Activated CD4-positive, alpha-beta memory T cell treated with anti-CD3 and anti-CD28 coated beads for 36 hours (primary cell): ENCODE measurements at regions of chr17 and their contacts with region 1.

Region 1: DNA sequence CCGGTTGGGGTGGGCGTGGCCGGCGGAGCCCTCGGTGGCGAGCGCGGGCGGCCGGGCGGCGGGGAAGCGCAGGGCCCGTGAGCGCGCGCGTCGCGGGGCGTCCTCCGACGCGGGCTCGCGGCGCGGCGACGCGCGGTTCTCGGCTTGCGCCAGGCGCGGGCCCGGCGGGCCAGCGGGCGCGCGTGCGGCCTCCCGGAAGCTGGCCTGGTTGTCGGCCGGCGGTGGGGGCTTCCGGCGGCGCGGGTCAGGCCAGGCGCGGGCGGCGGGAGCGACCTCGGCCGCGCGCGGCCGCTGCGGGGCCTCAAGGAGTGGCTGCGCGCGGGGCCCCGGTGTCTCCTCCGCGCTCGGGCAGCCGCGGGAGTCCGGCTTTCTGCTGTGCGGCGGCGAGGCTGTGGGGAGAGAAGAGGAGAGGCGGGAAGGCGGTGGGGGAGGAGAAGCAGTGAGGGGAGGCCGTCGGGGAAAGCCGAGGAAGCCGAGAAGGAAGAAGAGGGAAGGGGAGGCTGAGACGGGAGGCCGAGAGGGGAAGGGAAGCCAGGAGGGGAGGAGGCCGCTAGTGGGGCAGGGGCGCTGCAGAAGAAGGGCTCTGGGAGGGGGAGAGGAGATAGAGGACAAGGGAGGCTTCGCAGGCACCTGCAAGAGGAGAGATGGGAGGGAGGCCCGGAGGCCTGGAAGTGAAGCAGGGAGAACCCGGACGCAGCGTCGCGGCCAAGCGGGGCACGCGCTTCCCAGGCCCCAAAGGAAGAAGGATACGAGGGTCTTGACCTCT is 2.5 kb downstream of the C17orf58 start:
- DNase-seq: peak; percentile 82
- H3K4me3 Mint-ChIP-seq: peak overlapping the region; percentile 76
- H3K27ac Mint-ChIP-seq: peak overlapping the region; percentile 79
- H3K4me1 Mint-ChIP-seq: peaks cover 30% of the 10 kb centered on the region
- H3K27me3 Mint-ChIP-seq: no peaks in the 10 kb centered on the region

Region 2: DNA sequence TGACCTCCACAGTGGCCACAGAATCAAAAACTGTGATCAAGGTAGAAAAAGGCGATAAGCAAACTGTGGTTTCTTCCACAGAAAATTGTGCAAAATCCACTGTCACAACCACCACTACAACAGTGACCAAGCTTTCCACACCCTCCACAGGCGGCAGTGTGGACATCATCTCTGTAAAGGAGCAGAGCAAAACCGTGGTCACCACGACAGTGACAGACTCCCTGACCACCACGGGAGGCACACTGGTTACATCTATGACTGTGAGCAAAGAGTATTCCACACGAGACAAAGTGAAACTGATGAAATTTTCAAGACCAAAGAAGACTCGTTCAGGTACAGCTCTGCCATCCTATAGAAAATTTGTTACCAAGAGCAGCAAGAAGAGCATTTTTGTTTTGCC is 81.1 kb before region 1 on chr17:
- CTCF ChIA-PET with region 1: no interaction called
- POLR2A ChIA-PET with region 1: no interaction called
- intact Hi-C with region 1: loop called (anchors 1 kb)
- DNase-seq: peak; percentile 37
- H3K4me3 Mint-ChIP-seq: no peak overlapping the region
- H3K27ac Mint-ChIP-seq: peak overlapping the region; percentile 18
- H3K4me1 Mint-ChIP-seq: peaks cover 25% of the 10 kb centered on the region
- H3K27me3 Mint-ChIP-seq: no peaks in the 10 kb centered on the region

Region 3: DNA sequence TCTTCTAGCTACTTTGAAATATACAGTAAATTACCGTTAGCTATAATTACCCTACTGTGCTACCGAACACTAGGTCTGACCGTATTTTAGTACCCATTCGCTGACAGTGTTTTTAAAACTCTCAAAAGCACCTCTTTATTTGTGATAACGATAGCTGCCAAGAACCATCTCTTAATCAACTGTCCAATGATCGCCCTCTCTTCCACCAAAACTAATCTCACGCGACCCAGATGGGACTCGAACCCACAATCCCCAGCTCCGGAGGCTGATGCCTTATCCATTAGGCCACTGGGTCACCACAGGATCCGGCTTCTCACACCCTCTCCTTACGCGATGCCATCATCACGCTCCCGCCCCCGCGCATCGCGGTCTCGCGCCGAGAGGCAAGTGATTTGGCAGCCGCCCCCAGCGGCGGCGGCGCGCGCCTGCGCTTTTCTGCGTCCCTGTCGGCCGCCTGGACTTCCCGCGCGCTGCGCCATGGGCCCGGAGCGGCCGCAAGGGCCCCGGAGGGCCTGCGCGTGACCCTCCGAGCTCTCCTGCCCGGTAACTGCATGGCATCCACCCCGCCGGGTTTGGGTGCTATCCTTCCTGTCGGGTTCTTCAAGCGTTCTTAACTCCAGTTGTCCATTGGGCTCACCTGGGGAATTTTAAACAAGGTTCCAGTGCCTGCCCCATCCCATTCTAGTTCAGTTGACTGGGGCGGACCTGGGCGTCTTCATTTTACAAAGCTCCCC is 26.1 kb after region 1 on chr17:
- CTCF ChIA-PET with region 1: interaction called, 5 read pairs
- POLR2A ChIA-PET with region 1: interaction called, 21 read pairs
- intact Hi-C with region 1: loop called (anchors 1 kb)
- DNase-seq: peak; percentile 99
- H3K4me3 Mint-ChIP-seq: peak overlapping the region; percentile 86
- H3K27ac Mint-ChIP-seq: peak overlapping the region; percentile 75
- H3K4me1 Mint-ChIP-seq: peaks cover 9% of the 10 kb centered on the region
- H3K27me3 Mint-ChIP-seq: peaks cover 2% of the 10 kb centered on the region

Region 4: DNA sequence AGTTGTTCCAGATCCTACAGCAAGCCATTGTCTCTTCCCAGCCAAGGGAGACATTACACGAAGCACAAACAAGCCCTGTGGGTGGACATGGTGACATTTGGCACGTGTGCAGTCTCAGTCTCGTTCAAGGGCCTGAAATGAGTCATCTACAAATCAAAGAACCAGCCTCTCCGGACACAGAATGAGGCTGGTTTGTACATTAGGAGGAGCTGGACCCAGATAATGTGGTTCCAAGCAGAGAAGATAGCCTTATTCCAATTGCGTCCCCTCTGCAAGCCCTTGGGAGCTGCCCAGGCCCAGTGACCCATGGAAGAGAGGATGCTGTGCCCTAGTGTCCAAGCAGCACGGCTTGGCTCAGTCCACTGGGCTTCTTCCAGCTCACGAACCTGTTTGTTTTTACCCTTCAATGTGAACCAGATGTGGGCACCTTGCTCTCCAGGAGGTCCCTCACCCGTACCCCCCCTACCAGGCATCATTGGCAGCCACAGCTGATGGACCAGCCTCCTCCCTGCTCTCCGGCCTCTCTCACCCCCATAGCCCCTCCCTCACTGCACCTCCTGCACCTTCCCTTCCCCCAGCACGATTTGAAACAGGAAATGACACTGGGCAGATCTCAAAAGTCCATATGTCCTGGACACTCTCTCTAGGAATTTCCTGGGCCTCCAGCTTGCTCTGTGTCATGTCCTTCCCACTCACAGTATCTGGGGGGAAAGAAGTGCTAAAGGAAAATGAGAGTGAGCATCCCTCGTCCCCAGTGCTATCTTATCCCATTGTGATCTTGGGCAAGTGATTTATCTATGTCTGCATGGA is 67.9 kb after region 1 on chr17:
- CTCF ChIA-PET with region 1: no interaction called
- POLR2A ChIA-PET with region 1: no interaction called
- intact Hi-C with region 1: no loop called
- DNase-seq: no peak
- H3K4me3 Mint-ChIP-seq: no peak overlapping the region
- H3K27ac Mint-ChIP-seq: no peak overlapping the region
- H3K4me1 Mint-ChIP-seq: peaks cover 23% of the 10 kb centered on the region
- H3K27me3 Mint-ChIP-seq: no peaks in the 10 kb centered on the region

Region 5: DNA sequence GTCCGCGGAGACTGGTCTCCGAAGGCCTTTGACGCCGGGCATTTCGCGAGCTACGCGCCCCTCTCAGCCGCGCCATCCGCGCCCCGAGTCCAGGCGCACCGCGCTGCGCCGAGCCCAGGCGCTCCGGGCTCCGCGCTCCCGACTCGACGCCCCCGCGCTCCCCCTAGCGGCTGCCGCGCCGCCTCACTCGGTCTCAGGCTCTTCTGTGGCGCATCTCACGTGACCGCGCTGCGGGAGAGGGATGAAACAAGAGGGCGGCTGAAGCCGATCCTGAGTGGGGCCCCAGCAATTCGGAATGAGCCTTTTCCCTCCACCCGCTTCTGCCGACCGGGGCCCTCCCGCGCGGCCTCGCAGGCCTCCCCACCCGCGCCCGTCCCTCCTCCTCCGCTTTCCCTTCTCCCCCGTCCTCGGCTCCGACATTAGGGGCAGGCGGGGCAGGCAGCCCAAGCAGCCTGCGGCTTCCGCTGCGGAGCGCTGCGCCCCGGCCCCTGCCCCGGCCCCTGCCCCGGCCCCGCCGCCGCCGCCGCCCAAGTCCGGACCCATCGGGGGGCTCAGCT is 211.6 kb after region 1 on chr17:
- CTCF ChIA-PET with region 1: no interaction called
- POLR2A ChIA-PET with region 1: no interaction called
- intact Hi-C with region 1: loop called (anchors 5 kb)
- DNase-seq: peak; percentile 93
- H3K4me3 Mint-ChIP-seq: peak overlapping the region; percentile 81
- H3K27ac Mint-ChIP-seq: peak overlapping the region; percentile 89
- H3K4me1 Mint-ChIP-seq: peaks cover 32% of the 10 kb centered on the region
- H3K27me3 Mint-ChIP-seq: no peaks in the 10 kb centered on the region

Region 6: GRCh38 chr17:69327060-69327831 is 1333.5 kb after region 1 on chr17 and contains the start of gene ABCA5:
- CTCF ChIA-PET with region 1: no interaction called
- POLR2A ChIA-PET with region 1: no interaction called
- intact Hi-C with region 1: loop called (anchors 2 kb)
- DNase-seq: peak; percentile 93
- H3K4me3 Mint-ChIP-seq: peak within 1 kb of the TSS; percentile 97
- H3K27ac Mint-ChIP-seq: peak within 1 kb of the TSS; percentile 87
- H3K4me1 Mint-ChIP-seq: peaks cover 28% of the 10 kb centered on the region
- H3K27me3 Mint-ChIP-seq: peaks cover 2% of the 10 kb centered on the region
- total RNA-seq, gene ABCA5: 12.8 to 13.0 TPM